Activated CD4-positive, alpha-beta T cell treated with anti-CD3 and anti-CD28 coated beads for 36 hours (primary cell): ENCODE measurements at regions of chr21 and their contacts with region 1.

Region 1: GRCh38 chr21:17387030-17387617 is 125.7 kb upstream of the CXADR start:
- DNase-seq: peak; percentile 65
- ATAC-seq: peak; percentile 30
- H3K4me3 Mint-ChIP-seq: no peak overlapping the region
- H3K27ac Mint-ChIP-seq: no peak overlapping the region
- H3K4me1 Mint-ChIP-seq: no peaks in the 10 kb centered on the region
- H3K27me3 Mint-ChIP-seq: peaks cover 3% of the 10 kb centered on the region

Region 2: GRCh38 chr21:17580319-17580718 is 193.2 kb after region 1 on chr21:
- CTCF ChIA-PET with region 1: interaction called, 74 read pairs
- POLR2A ChIA-PET with region 1: no interaction called
- intact Hi-C with region 1: no loop called
- DNase-seq: no peak
- ATAC-seq: no peak
- H3K4me3 Mint-ChIP-seq: no peak overlapping the region
- H3K27ac Mint-ChIP-seq: no peak overlapping the region
- H3K4me1 Mint-ChIP-seq: no peaks in the 10 kb centered on the region
- H3K27me3 Mint-ChIP-seq: no peaks in the 10 kb centered on the region

Region 3: DNA sequence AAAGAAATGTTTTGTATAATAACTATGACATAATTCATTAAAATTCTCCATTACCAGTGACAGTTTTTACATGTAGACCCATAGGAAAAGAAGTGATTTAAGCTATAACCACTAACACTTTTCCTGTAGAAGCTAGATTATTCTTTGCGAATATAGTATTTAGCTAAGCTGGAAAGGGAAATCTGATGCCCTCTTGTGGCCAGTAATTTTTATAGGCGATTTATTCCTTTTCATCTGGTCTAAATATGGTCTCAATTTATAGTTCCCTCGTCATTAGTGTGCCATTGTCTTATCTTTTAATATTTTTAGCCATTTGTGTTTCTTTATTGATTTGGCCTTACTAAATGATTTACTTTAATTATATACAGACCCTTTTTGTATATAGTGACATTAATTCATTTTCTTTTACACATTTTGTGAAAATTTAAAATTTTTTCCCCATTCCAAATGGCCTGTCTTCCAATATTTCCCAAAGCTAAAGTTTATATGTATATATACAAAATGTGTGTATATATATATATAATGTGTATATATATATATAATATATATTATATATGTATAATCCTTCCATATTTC is 198.8 kb after region 1 on chr21:
- CTCF ChIA-PET with region 1: interaction called, 74 read pairs
- POLR2A ChIA-PET with region 1: no interaction called
- intact Hi-C with region 1: loop called (anchors 1 kb)
- DNase-seq: no peak
- ATAC-seq: no peak
- H3K4me3 Mint-ChIP-seq: no peak overlapping the region
- H3K27ac Mint-ChIP-seq: no peak overlapping the region
- H3K4me1 Mint-ChIP-seq: no peaks in the 10 kb centered on the region
- H3K27me3 Mint-ChIP-seq: no peaks in the 10 kb centered on the region

Region 4: GRCh38 chr21:17903029-17903806 is 516.1 kb after region 1 on chr21:
- CTCF ChIA-PET with region 1: no interaction called
- POLR2A ChIA-PET with region 1: no interaction called
- intact Hi-C with region 1: loop called in 1 of 2 experiments (anchors 10 kb)
- DNase-seq: no peak
- ATAC-seq: no peak
- H3K4me3 Mint-ChIP-seq: no peak overlapping the region
- H3K27ac Mint-ChIP-seq: no peak overlapping the region
- H3K4me1 Mint-ChIP-seq: peaks cover 4% of the 10 kb centered on the region
- H3K27me3 Mint-ChIP-seq: no peaks in the 10 kb centered on the region

Region 5: DNA sequence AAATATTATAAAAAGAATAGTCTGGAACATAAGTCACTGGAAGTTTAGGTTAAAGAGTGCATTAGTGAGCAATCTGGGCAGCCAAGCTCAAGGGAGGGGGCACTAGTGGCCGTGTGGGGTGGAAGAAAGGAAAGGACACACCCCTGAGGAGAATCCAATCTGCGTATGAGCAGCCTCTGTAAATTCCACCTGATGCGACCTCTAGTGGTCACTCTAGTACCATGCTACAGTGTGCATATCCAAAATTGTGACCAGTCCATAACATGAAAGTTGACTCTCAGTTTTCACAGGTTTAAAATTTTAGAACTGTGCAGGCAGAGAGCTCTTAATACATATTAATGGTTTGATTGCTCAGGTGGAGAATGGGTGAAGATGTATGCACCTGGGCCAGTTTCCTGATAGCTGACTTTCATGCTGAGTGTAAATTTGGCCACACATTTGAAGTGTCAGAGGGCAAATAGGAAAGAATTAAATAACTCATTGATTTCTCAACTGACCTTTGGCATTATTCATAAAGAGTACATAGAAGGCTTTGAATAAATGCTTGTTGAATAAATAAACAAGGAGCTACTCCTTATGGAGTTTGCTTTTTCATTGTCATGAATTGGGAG is 538.0 kb after region 1 on chr21:
- CTCF ChIA-PET with region 1: no interaction called
- POLR2A ChIA-PET with region 1: no interaction called
- intact Hi-C with region 1: loop called in 1 of 2 experiments (anchors 10 kb)
- DNase-seq: peak; percentile 67
- ATAC-seq: peak; percentile 96
- H3K4me3 Mint-ChIP-seq: no peak overlapping the region
- H3K27ac Mint-ChIP-seq: no peak overlapping the region
- H3K4me1 Mint-ChIP-seq: no peaks in the 10 kb centered on the region
- H3K27me3 Mint-ChIP-seq: no peaks in the 10 kb centered on the region